Activated CD4-positive, alpha-beta memory T cell treated with anti-CD3 and anti-CD28 coated beads for 36 hours (primary cell): ENCODE measurements at regions of chr7 and their contacts with region 1.

Region 1: DNA sequence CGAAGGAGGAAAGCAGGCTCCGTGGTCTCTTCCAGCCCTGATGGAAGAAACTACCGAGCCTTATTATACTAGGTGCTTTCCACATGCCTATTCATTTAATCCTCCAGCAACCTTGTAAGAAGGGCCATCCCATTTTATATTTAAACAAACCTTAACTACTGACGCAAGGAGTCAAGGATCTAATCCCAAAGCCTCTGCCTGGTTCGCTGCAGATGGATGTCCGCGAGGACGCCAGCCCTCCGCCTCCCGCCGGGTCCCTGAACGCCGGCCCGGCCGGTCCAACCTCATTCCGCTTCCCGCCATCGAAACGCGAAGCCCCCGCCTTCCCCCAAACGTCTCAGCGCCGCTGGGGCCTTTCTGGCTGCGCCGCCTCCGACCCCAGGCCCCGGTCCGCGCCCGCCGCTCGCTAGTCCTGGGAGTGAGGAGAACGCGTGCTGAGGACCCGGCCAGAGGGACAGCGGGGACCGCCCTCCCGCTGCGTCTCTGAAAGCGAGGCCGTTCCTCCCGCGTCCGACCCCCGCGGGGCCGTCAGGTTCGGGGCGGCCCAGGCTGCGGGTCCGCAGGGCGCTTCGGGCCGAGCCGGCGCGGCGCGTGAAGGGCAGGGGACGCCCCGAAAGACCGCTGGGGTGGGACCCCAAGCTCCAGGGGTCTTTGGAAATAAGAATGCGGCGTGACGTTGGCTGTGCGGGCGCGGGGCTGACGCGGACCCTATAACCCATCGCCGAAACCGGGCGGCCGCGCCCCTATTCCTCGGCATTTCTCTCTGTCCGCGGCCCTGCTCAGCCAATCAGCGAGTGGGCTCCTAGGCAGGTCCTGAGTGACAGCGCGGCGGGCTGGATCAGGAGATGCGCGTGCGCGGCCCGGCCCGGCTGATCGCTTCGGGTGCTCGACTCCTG is at the start of gene ATP6V0E2:
- DNase-seq: peak; percentile 96
- H3K4me3 Mint-ChIP-seq: peak within 1 kb of the TSS; percentile 86
- H3K27ac Mint-ChIP-seq: peak within 1 kb of the TSS; percentile 86
- H3K4me1 Mint-ChIP-seq: peaks cover 69% of the 10 kb centered on the region
- H3K27me3 Mint-ChIP-seq: no peaks in the 10 kb centered on the region
- total RNA-seq, gene ATP6V0E2: 33.5 to 34.1 TPM

Region 2: DNA sequence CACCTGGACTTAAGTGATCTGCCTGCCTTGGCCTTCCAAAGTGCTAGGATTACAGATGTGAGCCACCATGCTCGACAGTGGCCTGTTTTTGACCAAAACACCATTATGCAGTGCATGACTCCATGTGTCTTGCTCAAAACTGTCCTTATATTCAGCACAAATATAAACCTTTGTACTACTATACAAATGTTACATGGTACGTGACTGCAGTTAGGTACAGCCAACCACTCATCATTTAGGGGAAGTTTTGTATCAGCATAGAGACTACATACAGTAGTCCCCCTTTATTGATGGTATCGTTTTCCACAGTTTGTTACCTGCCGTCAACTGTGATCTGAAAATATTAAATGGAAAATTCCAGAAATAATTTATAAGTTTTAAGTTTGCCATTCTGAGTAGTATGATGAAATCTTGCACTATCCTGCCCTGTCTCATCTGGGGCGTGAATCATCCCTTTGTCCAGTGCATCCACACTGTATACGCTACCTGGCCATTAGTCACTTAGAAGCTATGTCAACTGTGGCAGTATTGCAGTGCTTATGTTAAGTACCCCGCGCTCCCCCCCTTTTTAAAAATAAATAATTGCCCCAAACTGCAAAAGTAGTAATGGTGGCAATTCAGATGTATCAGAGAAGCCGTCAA is 701.3 kb before region 1 on chr7:
- CTCF ChIA-PET with region 1: no interaction called
- POLR2A ChIA-PET with region 1: no interaction called
- intact Hi-C with region 1: no loop called
- DNase-seq: no peak
- H3K4me3 Mint-ChIP-seq: no peak overlapping the region
- H3K27ac Mint-ChIP-seq: no peak overlapping the region
- H3K4me1 Mint-ChIP-seq: no peaks in the 10 kb centered on the region
- H3K27me3 Mint-ChIP-seq: no peaks in the 10 kb centered on the region

Region 3: DNA sequence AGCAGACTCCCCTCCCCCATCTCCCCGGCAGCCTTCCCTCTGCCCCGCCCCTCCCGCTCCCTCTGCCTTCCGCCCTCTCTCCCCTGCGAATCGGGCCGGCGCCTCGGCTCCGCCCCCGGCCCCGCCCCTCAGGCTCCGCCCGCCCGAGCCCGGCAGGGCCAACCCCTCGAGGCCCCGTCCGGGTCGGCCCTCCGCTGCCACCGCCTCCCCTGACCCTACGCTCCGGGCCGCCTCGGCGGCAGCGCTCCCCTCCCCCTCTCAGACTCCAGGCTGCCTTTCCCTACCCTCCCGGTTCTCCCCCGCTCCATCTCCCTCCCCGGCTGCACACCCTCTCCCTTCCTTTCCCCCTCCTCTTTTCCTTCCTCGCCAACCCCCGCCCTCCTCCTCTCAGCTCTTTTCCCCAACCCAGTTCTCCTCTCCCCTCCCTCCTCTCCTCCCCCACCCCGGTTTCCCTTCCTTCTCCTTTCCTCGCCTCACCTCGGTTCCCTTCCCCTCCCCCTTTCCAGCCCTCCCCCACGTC is 101.5 kb before region 1 on chr7:
- CTCF ChIA-PET with region 1: no interaction called
- POLR2A ChIA-PET with region 1: no interaction called
- intact Hi-C with region 1: no loop called
- DNase-seq: peak; percentile 92
- H3K4me3 Mint-ChIP-seq: peak overlapping the region; percentile 69
- H3K27ac Mint-ChIP-seq: no peak overlapping the region
- H3K4me1 Mint-ChIP-seq: peaks cover 1% of the 10 kb centered on the region
- H3K27me3 Mint-ChIP-seq: peaks cover 2% of the 10 kb centered on the region

Region 4: GRCh38 chr7:149861446-149862045 is 11.8 kb before region 1 on chr7:
- CTCF ChIA-PET with region 1: interaction called, 13 read pairs
- POLR2A ChIA-PET with region 1: interaction called, 5 read pairs
- intact Hi-C with region 1: no loop called
- DNase-seq: peak; percentile 43
- H3K4me3 Mint-ChIP-seq: no peak overlapping the region
- H3K27ac Mint-ChIP-seq: no peak overlapping the region
- H3K4me1 Mint-ChIP-seq: peaks cover 46% of the 10 kb centered on the region
- H3K27me3 Mint-ChIP-seq: no peaks in the 10 kb centered on the region